Naive thymus-derived CD8-positive, alpha-beta T cell (primary cell): ENCODE measurements at regions of chr19 and their contacts with region 1.

Region 1: DNA sequence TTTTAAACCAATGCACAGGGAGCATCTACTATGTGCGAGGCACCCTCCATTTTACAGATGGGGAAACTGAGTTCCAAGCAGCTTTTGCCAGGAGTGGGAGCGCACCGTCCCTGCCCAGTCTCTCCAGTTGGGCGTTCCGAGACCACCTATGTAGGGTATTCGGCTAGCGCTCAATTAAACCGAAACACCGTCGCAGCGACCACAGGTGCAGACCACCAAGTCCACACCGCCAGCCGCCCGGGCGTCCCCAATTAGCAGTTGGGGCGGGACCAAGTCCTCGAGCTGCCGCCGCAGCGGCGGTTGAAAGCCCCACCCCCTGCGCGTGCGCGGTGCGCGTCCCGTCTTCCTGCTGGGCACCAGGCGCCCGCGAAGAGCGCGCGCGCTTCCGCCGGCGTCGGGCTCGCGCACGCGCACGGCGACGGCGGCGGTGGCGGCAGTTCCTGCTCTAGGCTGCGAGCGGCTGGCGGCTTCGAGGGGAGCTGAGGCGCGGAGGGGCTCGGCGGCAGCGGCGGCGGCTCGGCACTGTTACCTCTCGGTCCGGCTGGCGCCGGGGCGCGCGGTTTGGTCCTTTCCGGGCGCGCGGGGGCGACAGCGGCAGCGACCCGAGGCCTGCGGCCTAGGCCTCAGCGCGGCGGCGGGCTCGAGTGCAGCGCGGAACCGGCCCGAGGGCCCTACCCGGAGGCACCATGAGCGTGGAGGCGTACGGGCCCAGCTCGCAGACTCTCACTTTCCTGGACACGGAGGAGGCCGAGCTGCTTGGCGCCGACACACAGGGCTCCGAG is at the start of gene UPF1:
- DNase-seq: peak; percentile 89 to 99 (median 96)
- ATAC-seq: peak; percentile 81 to 86
- H3K4me3 Mint-ChIP-seq: peak within 1 kb of the TSS; percentile 87 to 96 (median 94)
- H3K27ac Mint-ChIP-seq: peak within 1 kb of the TSS; percentile 75 to 98 (median 93)
- H3K4me1 Mint-ChIP-seq: peaks cover 19 to 42% (median 40%) of the 10 kb centered on the region in 4 donors
- H3K27me3 Mint-ChIP-seq: peaks cover 0 to 5% (median 2%) of the 10 kb centered on the region in 5 donors
- polyA plus RNA-seq, gene UPF1: 7.5 to 28.4 (median 9.5) TPM

Region 2: GRCh38 chr19:18789883-18790565 is 41.7 kb before region 1 on chr19:
- POLR2A ChIA-PET with region 1: no interaction called
- DNase-seq: peak in 2 of 10 donors; percentile 12 to 37
- ATAC-seq: peak; percentile 13 to 16
- H3K4me3 Mint-ChIP-seq: peak overlapping the region; percentile 72 to 95 (median 84)
- H3K27ac Mint-ChIP-seq: peak overlapping the region in 1 of 10 donors; percentile 73
- H3K4me1 Mint-ChIP-seq: peaks cover 18 to 51% (median 46%) of the 10 kb centered on the region in 4 donors
- H3K27me3 Mint-ChIP-seq: peaks cover 30 to 87% (median 64%) of the 10 kb centered on the region in 5 donors

Region 3: GRCh38 chr19:18919086-18919899 is 87.6 kb after region 1 on chr19 and contains the starts of genes COPE and DDX49:
- POLR2A ChIA-PET with region 1: interaction called, 12 read pairs
- DNase-seq: peak; percentile 85 to 99 (median 98)
- ATAC-seq: peak; percentile 94 to 95
- H3K4me3 Mint-ChIP-seq: peak within 1 kb of the TSS; percentile 80 to 97 (median 92)
- H3K27ac Mint-ChIP-seq: peak within 1 kb of the TSS; percentile 72 to 98 (median 96)
- H3K4me1 Mint-ChIP-seq: peaks cover 14 to 58% (median 43%) of the 10 kb centered on the region in 4 donors
- H3K27me3 Mint-ChIP-seq: no peaks in the 10 kb centered on the region
- polyA plus RNA-seq, gene COPE: 224 to 259 (median 235) TPM
- polyA plus RNA-seq, gene DDX49: 21.7 to 37.5 (median 24.7) TPM